WTC11 (cell line): ENCODE measurements at regions of chr17 and their contacts with region 1.

Region 1: DNA sequence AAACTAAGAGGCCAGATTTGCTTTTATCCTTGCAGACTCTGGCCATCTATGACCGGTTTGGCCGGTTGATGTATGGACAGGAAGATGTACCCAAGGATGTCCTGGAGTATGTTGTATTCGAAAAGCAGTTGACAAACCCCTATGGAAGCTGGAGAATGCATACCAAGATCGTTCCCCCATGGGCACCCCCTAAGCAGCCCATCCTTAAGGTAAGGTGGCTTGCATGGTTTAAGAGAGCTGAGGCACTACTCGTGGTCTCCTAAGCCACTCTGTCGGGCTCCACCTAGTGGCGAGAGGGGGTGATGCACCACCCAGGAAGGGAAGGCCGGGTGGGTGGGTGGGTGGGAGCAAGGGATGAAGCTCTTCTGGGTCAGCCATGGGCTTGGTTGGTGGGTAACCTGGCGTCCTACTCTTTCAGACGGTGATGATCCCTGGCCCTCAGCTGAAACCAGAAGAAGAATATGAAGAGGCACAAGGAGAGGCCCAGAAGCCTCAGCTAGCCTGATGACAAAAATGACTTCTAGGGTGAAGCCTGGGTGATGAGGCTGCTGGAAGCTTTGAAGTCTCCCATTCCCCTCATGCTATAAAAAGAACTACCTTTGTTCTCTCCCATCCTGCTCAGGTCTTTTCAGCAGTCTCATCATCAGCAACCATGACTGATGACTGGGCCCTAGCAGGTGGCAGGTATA is 21.5 kb downstream of the GPR179 start:
- DNase-seq: peak; percentile 83
- ATAC-seq: peak; percentile 78
- H3K4me3 Mint-ChIP-seq: no peak overlapping the region
- H3K27ac Mint-ChIP-seq: no peak overlapping the region; the same call in 1 of the 2 replicates
- H3K4me1 Mint-ChIP-seq: peaks cover 22% of the 10 kb centered on the region
- H3K27me3 Mint-ChIP-seq: no peaks in the 10 kb centered on the region
- CTCF ChIP-seq: peak; percentile 90

Region 2: DNA sequence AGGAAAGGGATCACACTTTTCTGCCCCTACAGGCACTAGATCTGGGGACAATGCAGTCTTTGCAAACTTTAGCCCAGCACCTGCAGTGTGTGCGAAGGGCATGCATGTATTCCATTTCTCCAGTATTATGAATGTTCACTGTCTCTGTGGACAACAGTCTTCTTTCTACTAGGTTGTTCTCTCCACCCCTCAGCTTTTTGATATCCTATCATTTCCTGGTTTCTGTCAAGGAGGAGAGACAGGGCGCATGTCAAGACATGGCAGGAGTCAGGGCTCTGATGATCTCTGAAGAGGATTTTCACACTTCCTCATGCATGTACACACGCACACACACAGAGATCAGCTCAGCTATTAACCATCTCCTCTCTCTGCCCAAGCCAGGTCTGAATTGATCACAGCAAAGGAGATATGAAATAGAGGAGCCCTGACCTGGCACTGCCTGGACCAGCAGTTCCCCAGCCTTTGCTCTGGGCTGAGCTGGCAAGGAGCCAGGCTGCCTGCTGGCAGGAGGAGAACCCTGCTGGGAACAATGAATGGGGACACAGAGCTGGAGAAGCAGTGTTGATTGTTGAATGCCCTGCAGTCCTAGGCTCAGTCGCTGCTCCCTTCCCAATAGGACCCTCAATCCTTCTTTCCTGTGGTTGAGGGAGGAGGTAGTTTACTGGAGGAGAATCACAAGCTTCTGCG is 18.9 kb after region 1 on chr17:
- CTCF ChIA-PET with region 1: interaction called, 221 read pairs
- POLR2A ChIA-PET with region 1: interaction called, 4 read pairs
- DNase-seq: peak; percentile 40
- ATAC-seq: peak; percentile 85
- H3K4me3 Mint-ChIP-seq: no peak overlapping the region
- H3K27ac Mint-ChIP-seq: no peak overlapping the region
- H3K4me1 Mint-ChIP-seq: peaks cover 16% of the 10 kb centered on the region
- H3K27me3 Mint-ChIP-seq: no peaks in the 10 kb centered on the region; the same call in 1 of the 2 replicates
- CTCF ChIP-seq: no peak

Region 3: GRCh38 chr17:38403491-38403890 is 81.3 kb after region 1 on chr17:
- CTCF ChIA-PET with region 1: interaction called, 15 read pairs
- POLR2A ChIA-PET with region 1: interaction called, 4 read pairs
- DNase-seq: no peak
- ATAC-seq: peak; percentile 62
- H3K4me3 Mint-ChIP-seq: peak overlapping the region; percentile 45
- H3K27ac Mint-ChIP-seq: peak overlapping the region; percentile 70; the same call in 1 of the 2 replicates
- H3K4me1 Mint-ChIP-seq: peaks cover 37% of the 10 kb centered on the region
- H3K27me3 Mint-ChIP-seq: no peaks in the 10 kb centered on the region
- CTCF ChIP-seq: no peak